CD8-positive, alpha-beta T cell (primary cell): ENCODE measurements at regions of chr2 and their contacts with region 1.

Region 1: GRCh38 chr2:25878361-25879132 is at the start of gene ASXL2:
- DNase-seq: peak; percentile 93 to 100 (median 97)
- ATAC-seq: peak; percentile 85
- H3K4me3 ChIP-seq: peak within 1 kb of the TSS; percentile 74 to 93
- H3K4me3 Mint-ChIP-seq: peak within 1 kb of the TSS; percentile 92
- H3K27ac ChIP-seq: peak within 1 kb of the TSS; percentile 95 to 96
- H3K27ac Mint-ChIP-seq: peak within 1 kb of the TSS; percentile 99
- H3K4me1 ChIP-seq: peaks cover 25% of the 10 kb centered on the region
- H3K4me1 Mint-ChIP-seq: peaks cover 34% of the 10 kb centered on the region
- H3K27me3 ChIP-seq: no peaks in the 10 kb centered on the region
- H3K27me3 Mint-ChIP-seq: no peaks in the 10 kb centered on the region
- CTCF ChIP-seq: no peak
- total RNA-seq, gene ASXL2: 7.5 to 10.7 TPM

Region 2: DNA sequence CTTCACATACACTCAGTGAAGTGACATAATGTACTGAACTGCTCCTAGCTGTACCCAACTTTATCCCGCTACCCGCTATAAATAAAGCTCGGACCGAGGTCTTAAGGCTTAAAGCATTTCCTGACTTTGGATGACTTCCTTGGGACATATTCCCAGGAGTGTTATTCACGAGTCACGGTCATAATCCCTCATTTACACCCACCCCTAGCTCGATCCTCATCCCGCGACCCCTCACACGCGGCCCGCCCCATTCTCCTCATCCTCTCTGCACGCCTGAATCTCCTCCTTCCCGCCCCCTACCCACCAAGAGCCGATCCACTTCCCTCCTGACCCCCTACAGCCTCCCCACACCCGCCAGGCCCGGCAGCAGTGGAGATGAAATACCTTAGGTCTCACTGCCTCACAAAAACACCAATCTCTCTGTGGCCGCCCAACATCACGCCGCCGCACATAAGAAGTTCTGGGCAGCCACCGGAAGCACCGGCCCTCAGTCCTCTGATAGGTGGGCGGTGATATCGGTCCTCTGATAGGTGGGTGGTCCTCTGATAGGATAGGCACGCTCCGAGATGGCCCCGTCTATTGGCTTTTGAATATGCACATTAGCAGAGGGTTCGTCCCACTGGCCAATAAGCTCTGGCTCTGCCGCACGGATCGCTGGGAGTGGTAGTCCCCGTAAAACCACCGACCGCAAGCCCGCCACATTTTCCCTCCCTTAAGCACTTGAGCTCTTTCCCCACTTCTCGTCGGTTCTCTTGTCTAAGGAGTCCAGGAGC is 1831.4 kb before region 1 on chr2 and contains the start of gene WDCP:
- CTCF ChIA-PET with region 1: no interaction called
- POLR2A ChIA-PET with region 1: no interaction called
- intact Hi-C with region 1: loop called in 1 of 2 experiments (anchors 5 kb)
- DNase-seq: peak; percentile 81 to 98 (median 92)
- ATAC-seq: peak; percentile 98
- H3K4me3 ChIP-seq: peak within 1 kb of the TSS; percentile 80 to 87
- H3K4me3 Mint-ChIP-seq: peak within 1 kb of the TSS; percentile 93
- H3K27ac ChIP-seq: peak within 1 kb of the TSS; percentile 54 to 56
- H3K27ac Mint-ChIP-seq: peak within 1 kb of the TSS; percentile 90
- H3K4me1 ChIP-seq: peaks cover 21% of the 10 kb centered on the region
- H3K4me1 Mint-ChIP-seq: peaks cover 35% of the 10 kb centered on the region
- H3K27me3 ChIP-seq: no peaks in the 10 kb centered on the region
- H3K27me3 Mint-ChIP-seq: peaks cover 2% of the 10 kb centered on the region
- CTCF ChIP-seq: no peak
- total RNA-seq, gene WDCP: 3.7 to 4.8 TPM

Region 3: GRCh38 chr2:25041928-25042320 is 836.6 kb before region 1 on chr2 and contains the start of gene EFR3B:
- CTCF ChIA-PET with region 1: no interaction called
- POLR2A ChIA-PET with region 1: no interaction called
- intact Hi-C with region 1: loop called in 1 of 2 experiments (anchors 5 kb)
- DNase-seq: peak; percentile 70 to 95 (median 88)
- ATAC-seq: peak; percentile 95
- H3K4me3 ChIP-seq: peak within 1 kb of the TSS; percentile 48 to 72
- H3K4me3 Mint-ChIP-seq: peak within 1 kb of the TSS; percentile 90
- H3K27ac ChIP-seq: no peak within 1 kb of the TSS
- H3K27ac Mint-ChIP-seq: peak within 1 kb of the TSS; percentile 6
- H3K4me1 ChIP-seq: peaks cover 17% of the 10 kb centered on the region
- H3K4me1 Mint-ChIP-seq: peaks cover 21% of the 10 kb centered on the region
- H3K27me3 ChIP-seq: peaks cover 3 to 16% of the 10 kb centered on the region in 2 experiments
- H3K27me3 Mint-ChIP-seq: peaks cover 35% of the 10 kb centered on the region
- CTCF ChIP-seq: no peak
- total RNA-seq, gene EFR3B: 0.08 TPM in 1 of 2 experiments, not detected in the other

Region 4: DNA sequence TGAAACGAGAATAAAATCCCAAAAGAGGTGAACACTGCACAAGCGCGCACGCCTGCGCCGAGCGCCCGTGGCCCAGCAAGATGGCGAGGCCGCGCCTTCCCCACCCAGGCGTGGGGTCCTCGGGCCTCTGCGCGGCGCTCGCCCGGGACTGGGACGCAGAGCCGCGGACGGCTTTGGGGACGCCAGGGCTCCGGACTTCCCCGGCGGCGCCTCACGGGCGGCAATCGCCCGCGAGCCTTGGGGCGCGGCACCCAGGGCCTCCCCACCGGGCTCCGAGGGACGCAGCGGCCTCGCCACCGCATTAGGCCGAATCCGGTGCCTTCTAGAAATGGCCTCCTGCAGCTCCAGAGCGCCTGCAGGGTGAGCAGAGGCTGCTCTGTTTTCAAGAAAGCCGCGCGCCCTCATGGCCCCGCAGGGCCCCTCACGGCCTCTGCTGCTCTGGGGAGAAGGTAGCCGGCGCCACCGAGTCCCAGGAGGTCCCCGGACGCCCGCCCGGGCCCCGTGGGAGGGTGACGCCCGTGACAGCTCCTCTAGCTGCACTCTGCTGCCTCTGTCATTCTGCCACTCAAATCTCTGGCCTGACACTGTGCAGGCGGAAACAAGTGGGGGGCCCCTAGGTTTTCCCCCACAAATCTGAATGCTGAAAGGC is 674.2 kb before region 1 on chr2:
- CTCF ChIA-PET with region 1: no interaction called
- POLR2A ChIA-PET with region 1: no interaction called
- intact Hi-C with region 1: no loop called
- DNase-seq: peak in 5 of 9 experiments; percentile 19 to 64 (median 26)
- ATAC-seq: peak; percentile 70
- H3K4me3 ChIP-seq: peak overlapping the region in 1 of 2 experiments; percentile 12
- H3K4me3 Mint-ChIP-seq: no peak overlapping the region
- H3K27ac ChIP-seq: no peak overlapping the region
- H3K27ac Mint-ChIP-seq: no peak overlapping the region
- H3K4me1 ChIP-seq: peaks cover 31% of the 10 kb centered on the region
- H3K4me1 Mint-ChIP-seq: peaks cover 32% of the 10 kb centered on the region
- H3K27me3 ChIP-seq: no peaks in the 10 kb centered on the region
- H3K27me3 Mint-ChIP-seq: no peaks in the 10 kb centered on the region
- CTCF ChIP-seq: no peak

Region 5: DNA sequence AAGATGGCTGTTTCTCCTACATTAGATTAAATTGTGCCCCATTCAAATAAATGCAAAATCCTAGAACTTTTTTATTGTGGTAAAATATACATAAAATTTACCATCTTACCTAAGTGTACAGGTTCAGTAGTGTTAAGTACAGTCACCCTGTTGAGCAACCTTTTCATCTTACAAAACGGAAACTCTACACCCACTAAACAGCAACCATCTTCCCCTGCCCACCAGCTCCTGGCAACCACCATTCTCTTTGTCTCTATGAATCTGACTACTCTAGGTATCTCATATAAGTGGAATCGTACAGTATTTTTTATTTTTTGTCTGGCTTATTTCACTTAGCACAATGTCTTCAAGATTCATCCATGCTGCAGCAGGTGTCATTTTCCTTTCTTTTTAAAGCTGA is 53.3 kb before region 1 on chr2:
- CTCF ChIA-PET with region 1: no interaction called
- POLR2A ChIA-PET with region 1: no interaction called
- intact Hi-C with region 1: loop called in 1 of 2 experiments (anchors 2 kb)
- DNase-seq: peak in 7 of 9 experiments; percentile 14 to 74 (median 45)
- ATAC-seq: peak; percentile 83
- H3K4me3 ChIP-seq: no peak overlapping the region
- H3K4me3 Mint-ChIP-seq: peak overlapping the region; percentile 33
- H3K27ac ChIP-seq: no peak overlapping the region
- H3K27ac Mint-ChIP-seq: peak overlapping the region; percentile 74
- H3K4me1 ChIP-seq: peaks cover 36% of the 10 kb centered on the region
- H3K4me1 Mint-ChIP-seq: peaks cover 68% of the 10 kb centered on the region
- H3K27me3 ChIP-seq: no peaks in the 10 kb centered on the region
- H3K27me3 Mint-ChIP-seq: no peaks in the 10 kb centered on the region
- CTCF ChIP-seq: no peak

Region 6: DNA sequence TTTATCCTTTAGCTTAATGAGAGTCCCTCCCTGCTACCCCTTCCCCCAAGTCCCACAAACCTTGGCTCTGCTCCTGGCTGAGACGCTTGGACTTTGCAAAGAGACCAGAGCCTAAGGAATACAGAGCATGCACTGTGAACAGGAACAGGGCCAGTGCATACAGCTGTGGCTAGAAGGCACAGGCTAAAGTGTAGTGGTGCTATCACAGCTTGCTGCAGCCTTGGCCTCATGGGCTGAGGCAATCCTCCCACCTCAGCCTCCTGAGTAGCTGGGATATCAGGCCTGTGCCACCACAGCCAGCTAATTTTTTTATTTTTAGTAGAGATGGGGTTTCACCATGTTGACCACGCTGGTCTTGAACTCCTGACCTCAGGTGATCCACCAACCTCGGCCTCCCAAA is 39.3 kb after region 1 on chr2:
- CTCF ChIA-PET with region 1: no interaction called
- POLR2A ChIA-PET with region 1: interaction called, 14 read pairs
- intact Hi-C with region 1: no loop called
- DNase-seq: no peak
- ATAC-seq: no peak
- H3K4me3 ChIP-seq: no peak overlapping the region
- H3K4me3 Mint-ChIP-seq: no peak overlapping the region
- H3K27ac ChIP-seq: no peak overlapping the region
- H3K27ac Mint-ChIP-seq: no peak overlapping the region
- H3K4me1 ChIP-seq: peaks cover 6% of the 10 kb centered on the region
- H3K4me1 Mint-ChIP-seq: peaks cover 16% of the 10 kb centered on the region
- H3K27me3 ChIP-seq: no peaks in the 10 kb centered on the region
- H3K27me3 Mint-ChIP-seq: no peaks in the 10 kb centered on the region
- CTCF ChIP-seq: no peak

Region 7: DNA sequence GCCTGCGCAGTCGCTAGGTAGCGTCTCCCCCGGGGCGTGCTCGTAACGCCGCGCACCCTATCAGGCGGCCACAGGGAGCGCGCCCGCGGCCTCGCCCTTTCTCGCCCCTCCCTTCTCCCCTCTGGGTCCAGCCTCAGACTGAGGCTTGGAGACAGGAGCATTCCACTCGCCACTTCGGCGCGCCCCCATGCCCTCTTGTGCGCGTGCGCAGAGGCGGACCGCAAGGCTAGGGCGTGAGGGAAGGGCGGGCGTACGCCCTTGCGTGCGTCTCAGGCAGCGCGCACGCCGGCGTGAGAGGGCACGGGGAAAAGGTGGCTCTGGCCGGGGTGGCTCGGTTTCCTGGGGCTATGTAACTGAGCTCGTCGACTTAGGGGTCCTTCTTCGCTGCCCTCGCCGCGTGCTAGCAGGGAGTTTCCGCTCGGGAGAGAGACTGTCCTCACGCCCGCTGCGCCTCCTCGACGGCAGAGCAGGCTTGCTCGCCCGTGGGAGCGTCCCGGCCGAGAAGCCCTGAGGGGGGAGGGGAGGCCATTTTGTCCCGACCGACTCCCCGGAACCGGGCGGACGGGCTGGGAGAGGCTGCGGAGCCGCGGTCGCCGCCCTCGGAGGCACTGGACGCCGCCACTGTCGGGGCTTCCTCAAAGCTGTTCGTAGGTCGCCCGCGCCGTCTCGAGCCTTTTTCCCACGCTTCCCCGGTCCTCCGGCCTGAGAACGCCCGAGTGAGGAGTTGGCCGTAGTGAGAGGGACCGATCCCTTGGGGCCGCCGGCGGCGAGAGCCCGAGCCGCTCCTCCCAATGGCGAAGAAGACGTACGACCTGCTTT is 155.5 kb after region 1 on chr2 and contains the start of gene RAB10:
- CTCF ChIA-PET with region 1: interaction called, 4 read pairs
- POLR2A ChIA-PET with region 1: interaction called, 15 read pairs
- intact Hi-C with region 1: loop called (anchors 1 kb)
- DNase-seq: peak; percentile 98 to 100 (median 99)
- ATAC-seq: peak; percentile 89
- H3K4me3 ChIP-seq: peak within 1 kb of the TSS; percentile 82 to 99
- H3K4me3 Mint-ChIP-seq: peak within 1 kb of the TSS; percentile 95
- H3K27ac ChIP-seq: peak within 1 kb of the TSS; percentile 92 to 93
- H3K27ac Mint-ChIP-seq: peak within 1 kb of the TSS; percentile 98
- H3K4me1 ChIP-seq: peaks cover 29% of the 10 kb centered on the region
- H3K4me1 Mint-ChIP-seq: peaks cover 40% of the 10 kb centered on the region
- H3K27me3 ChIP-seq: no peaks in the 10 kb centered on the region
- H3K27me3 Mint-ChIP-seq: no peaks in the 10 kb centered on the region
- CTCF ChIP-seq: no peak
- total RNA-seq, gene RAB10: 12.7 TPM

Region 8: GRCh38 chr2:26299471-26300101 is 421.0 kb after region 1 on chr2:
- CTCF ChIA-PET with region 1: no interaction called
- POLR2A ChIA-PET with region 1: no interaction called
- intact Hi-C with region 1: loop called in 1 of 2 experiments (anchors 1 kb)
- DNase-seq: peak in 6 of 9 experiments; percentile 13 to 64 (median 29)
- ATAC-seq: peak; percentile 49
- H3K4me3 ChIP-seq: peak overlapping the region; percentile 78 to 84
- H3K4me3 Mint-ChIP-seq: no peak overlapping the region
- H3K27ac ChIP-seq: peak overlapping the region; percentile 68 to 80
- H3K27ac Mint-ChIP-seq: no peak overlapping the region
- H3K4me1 ChIP-seq: peaks cover 19% of the 10 kb centered on the region
- H3K4me1 Mint-ChIP-seq: no peaks in the 10 kb centered on the region
- H3K27me3 ChIP-seq: no peaks in the 10 kb centered on the region
- H3K27me3 Mint-ChIP-seq: no peaks in the 10 kb centered on the region
- CTCF ChIP-seq: no peak